H1 (cell line): ENCODE measurements at regions of chr7 and their contacts with region 1.

Region 1: DNA sequence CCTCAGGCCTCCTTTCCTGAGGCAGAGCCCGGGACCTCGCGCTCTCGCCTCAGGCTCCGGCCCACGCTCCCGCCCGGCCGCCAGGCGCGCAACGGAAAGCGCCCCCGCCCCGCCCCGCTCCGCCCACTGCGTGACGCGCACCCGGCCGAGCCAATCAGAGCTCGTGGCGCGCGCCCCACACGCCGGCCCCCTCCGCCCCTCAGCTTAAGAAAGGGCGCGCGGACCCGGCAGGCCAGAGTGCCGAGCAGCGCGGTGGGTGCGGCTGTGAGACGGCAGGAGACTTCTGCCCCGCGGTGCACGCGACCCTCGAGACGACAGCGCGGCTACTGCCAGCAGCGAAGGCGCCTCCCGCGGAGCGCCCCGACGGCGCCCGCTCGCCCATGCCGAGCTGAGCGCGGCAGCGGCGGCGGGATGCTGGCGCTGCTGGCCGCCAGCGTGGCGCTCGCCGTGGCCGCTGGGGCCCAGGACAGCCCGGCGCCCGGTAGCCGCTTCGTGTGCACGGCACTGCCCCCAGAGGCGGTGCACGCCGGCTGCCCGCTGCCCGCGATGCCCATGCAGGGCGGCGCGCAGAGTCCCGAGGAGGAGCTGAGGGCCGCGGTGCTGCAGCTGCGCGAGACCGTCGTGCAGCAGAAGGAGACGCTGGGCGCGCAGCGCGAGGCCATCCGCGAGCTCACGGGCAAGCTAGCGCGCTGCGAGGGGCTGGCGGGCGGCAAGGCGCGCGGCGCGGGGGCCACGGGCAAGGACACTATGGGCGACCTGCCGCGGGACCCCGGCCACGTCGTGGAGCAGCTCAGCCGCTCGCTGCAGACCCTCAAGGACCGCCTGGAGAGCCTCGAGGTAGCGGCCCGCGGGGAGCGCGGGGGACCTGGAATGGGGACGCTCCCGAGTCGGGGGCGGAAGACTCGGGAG is at the start of gene NPTX2:
- DNase-seq: peak in 1 of 2 experiments; percentile 92
- H3K4me3 ChIP-seq: peak within 1 kb of the TSS; percentile 53 to 72 (median 62)
- H3K27ac ChIP-seq: no peak within 1 kb of the TSS
- H3K4me1 ChIP-seq: peaks cover 0 to 8% (median 3%) of the 10 kb centered on the region in 4 experiments
- H3K27me3 ChIP-seq: peaks cover 12 to 61% (median 42%) of the 10 kb centered on the region in 4 experiments
- CTCF ChIP-seq: peak; percentile 49 to 60 (median 53)
- EP300 ChIP-seq: no peak; a peak in 1 of 3 replicates
- POLR2A ChIP-seq: peak in 1 of 2 experiments; percentile 92; a peak in 2 of 3 replicates
- RAD21 ChIP-seq: peak; percentile 7 to 38; a peak in 3 of 4 replicates
- total RNA-seq, gene NPTX2: 14.0 and 18.4 TPM in 2 replicates

Region 2: GRCh38 chr7:98629001-98629431 is 11.7 kb after region 1 on chr7:
- CTCF ChIA-PET with region 1: interaction called, 22 read pairs
- POLR2A ChIA-PET with region 1: interaction called, 5 read pairs
- DNase-seq: no peak
- H3K4me3 ChIP-seq: peak overlapping the region in 1 of 4 experiments; percentile 19; a peak in 2 of 8 replicates
- H3K27ac ChIP-seq: no peak overlapping the region
- H3K4me1 ChIP-seq: peaks cover 0 to 21% (median 7%) of the 10 kb centered on the region in 4 experiments; a peak in 6 of 7 replicates
- H3K27me3 ChIP-seq: no peaks in the 10 kb centered on the region
- CTCF ChIP-seq: no peak
- EP300 ChIP-seq: no peak
- POLR2A ChIP-seq: no peak
- RAD21 ChIP-seq: no peak

Region 3: GRCh38 chr7:98641646-98642500 is 24.6 kb after region 1 on chr7:
- CTCF ChIA-PET with region 1: interaction called, 8 read pairs
- POLR2A ChIA-PET with region 1: interaction called, 15 read pairs
- DNase-seq: no peak
- H3K4me3 ChIP-seq: no peak overlapping the region
- H3K27ac ChIP-seq: no peak overlapping the region
- H3K4me1 ChIP-seq: peaks cover 0 to 4% (median under 1%) of the 10 kb centered on the region in 4 experiments; a peak in 2 of 7 replicates
- H3K27me3 ChIP-seq: no peaks in the 10 kb centered on the region
- CTCF ChIP-seq: no peak
- EP300 ChIP-seq: no peak
- POLR2A ChIP-seq: no peak
- RAD21 ChIP-seq: no peak